Common myeloid progenitor, CD34-positive (primary cell): ENCODE measurements at regions of chr1 and their contacts with region 1.

Region 1: GRCh38 chr1:3586932-3587678 is 24.2 kb downstream of the MEGF6 start:
- DNase-seq: no peak
- H3K4me3 ChIP-seq: no peak overlapping the region
- H3K27ac ChIP-seq: no peak overlapping the region
- H3K4me1 ChIP-seq: peaks cover 0 to 3% (median 0%) of the 10 kb centered on the region in 4 experiments
- H3K27me3 ChIP-seq: no peaks in the 10 kb centered on the region

Region 2: GRCh38 chr1:3536420-3537195 is 50.5 kb before region 1 on chr1:
- CTCF ChIA-PET with region 1: no interaction called
- POLR2A ChIA-PET with region 1: no interaction called
- DNase-seq: no peak
- H3K4me3 ChIP-seq: no peak overlapping the region
- H3K27ac ChIP-seq: no peak overlapping the region
- H3K4me1 ChIP-seq: peaks cover 0 to 56% (median 32%) of the 10 kb centered on the region in 4 experiments
- H3K27me3 ChIP-seq: no peaks in the 10 kb centered on the region

Region 3: DNA sequence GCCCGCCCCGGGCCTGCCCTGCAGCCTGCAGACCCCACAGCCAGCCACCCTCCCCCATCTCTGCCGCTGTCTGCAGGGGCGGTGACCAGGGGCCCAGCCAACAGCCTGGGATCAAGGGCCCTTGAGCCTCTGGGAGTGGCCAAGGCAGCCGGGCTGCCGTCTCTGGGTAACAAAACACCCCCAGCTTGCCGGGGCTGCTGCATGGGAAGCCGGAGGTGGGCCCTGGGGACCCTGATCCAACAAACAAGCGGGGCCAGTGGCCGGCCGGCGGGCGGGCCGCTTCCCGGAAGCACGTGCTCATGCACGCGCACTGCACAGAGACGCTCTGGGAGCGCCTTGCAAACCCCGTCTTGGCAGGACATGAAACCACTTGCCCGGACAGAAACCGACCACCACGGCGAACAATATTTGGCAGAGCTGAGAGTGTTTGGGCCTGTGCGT is 11.0 kb after region 1 on chr1:
- CTCF ChIA-PET with region 1: interaction called, 11 read pairs
- POLR2A ChIA-PET with region 1: no interaction called
- DNase-seq: peak in 1 of 3 donors; percentile 15
- H3K4me3 ChIP-seq: peak overlapping the region in 4 of 7 experiments; percentile 19 to 42 (median 22)
- H3K27ac ChIP-seq: no peak overlapping the region
- H3K4me1 ChIP-seq: peaks cover 0 to 80% (median 41%) of the 10 kb centered on the region in 4 experiments
- H3K27me3 ChIP-seq: no peaks in the 10 kb centered on the region

Region 4: DNA sequence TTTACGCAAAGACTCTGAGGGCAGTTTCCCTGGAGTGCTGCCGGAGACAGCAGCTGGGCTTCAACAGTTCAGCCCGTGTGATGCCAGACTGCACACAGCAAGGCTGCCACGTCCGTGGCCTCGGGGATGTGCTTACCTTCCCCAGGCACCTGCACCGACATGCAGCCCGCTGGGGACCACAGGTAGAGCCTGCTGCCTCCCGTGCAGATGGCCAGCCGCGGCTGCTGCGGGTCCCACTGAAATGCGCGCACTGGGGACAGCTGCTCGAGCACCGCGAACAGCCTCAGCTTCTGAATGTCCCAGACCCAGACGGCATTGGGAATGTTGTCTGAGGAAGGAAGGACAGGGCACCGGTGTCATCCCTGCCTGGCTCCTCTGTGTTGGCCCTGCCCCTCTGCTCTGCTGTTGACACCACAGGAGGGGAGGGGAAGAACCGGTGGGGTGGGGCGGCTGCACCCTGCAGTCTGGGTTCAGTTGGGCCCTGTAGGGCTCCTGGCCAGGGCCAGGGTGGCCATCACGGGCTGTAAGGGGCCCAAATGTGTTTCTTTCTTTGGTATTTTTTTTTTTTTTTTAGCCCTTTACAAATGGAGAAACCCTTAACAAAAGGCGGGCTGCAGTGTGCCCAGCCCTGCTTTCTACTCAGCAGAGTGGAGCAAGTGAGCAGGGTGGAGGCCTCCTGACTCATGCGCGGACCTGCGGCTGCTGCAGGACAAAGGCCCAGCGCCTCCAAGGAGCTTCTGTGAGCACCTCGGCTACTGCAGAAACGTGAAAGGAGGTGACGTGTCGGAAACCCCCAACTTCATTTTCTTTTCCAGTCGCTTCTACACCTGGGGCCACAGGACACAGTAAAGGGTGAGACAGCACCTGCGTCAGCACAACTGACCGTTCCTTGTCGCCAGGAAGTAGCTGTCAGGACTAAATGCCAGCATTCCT is 44.5 kb after region 1 on chr1:
- CTCF ChIA-PET with region 1: no interaction called
- POLR2A ChIA-PET with region 1: no interaction called
- DNase-seq: no peak
- H3K4me3 ChIP-seq: no peak overlapping the region
- H3K27ac ChIP-seq: no peak overlapping the region
- H3K4me1 ChIP-seq: peaks cover 0 to 8% (median 4%) of the 10 kb centered on the region in 4 experiments
- H3K27me3 ChIP-seq: no peaks in the 10 kb centered on the region